Dendritic cell treated with granulocyte-macrophage colony-stimulating factor and Interleukin-4, amounts not matched to agents 40 ng/mL and 50 ng/mL, for 4 days (primary cell): ENCODE measurements at regions of chr17 and their contacts with region 1.

Region 1: GRCh38 chr17:3004133-3004801 is 59.1 kb downstream of the OR1D5 start:
- H3K4me3 Mint-ChIP-seq: peak overlapping the region; percentile 59
- H3K27ac Mint-ChIP-seq: peak overlapping the region; percentile 74
- H3K4me1 Mint-ChIP-seq: peaks cover 44% of the 10 kb centered on the region
- H3K27me3 Mint-ChIP-seq: no peaks in the 10 kb centered on the region

Region 2: GRCh38 chr17:2745317-2746037 is 258.8 kb before region 1 on chr17:
- intact Hi-C with region 1: no loop called
- H3K4me3 Mint-ChIP-seq: no peak overlapping the region
- H3K27ac Mint-ChIP-seq: no peak overlapping the region
- H3K4me1 Mint-ChIP-seq: no peaks in the 10 kb centered on the region
- H3K27me3 Mint-ChIP-seq: peaks cover 50% of the 10 kb centered on the region

Region 3: DNA sequence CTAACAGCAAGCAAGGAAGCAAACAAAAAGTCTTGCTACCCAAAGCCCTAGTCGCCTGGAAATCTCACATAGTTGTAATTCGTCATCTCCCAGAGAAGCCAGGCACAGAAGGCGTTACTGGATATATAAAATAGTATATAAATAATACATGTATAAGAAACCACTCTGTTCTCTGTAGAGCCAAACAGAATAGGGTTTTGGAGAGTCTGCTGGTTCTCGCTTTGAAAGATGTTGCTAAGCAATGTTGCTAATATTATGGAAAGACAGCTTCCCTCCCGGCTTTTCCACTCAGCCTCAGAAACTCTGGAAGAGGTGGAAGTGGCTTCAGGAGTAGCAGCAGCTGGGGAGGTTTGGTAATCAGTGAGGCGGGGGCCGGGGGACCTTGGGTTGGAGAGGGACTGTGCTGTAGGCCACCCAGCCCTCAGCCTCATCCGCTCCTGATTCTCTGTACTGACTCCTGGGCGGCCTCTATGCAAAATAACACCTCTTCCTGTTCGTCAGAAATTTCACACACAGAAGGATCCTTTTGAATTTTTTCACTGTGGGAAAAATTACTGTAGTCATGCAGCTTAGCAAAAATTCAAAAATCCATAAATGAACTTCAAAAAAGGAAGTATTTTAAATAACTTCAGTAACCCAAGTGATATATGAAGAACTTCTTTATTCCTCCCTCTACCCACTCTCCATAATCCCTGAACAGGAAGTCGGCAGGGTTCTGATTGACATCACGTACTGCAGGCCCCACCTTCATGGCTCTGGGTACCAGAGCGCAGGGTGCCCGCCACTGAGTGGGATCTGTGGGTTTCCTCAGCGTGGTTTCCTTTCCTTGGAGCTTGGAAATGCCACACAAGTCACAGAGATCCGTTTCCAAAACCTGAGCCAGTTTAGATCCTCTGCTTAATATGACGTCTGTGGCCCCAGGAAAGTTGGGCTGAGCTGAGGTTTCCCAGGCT is 156.6 kb before region 1 on chr17:
- intact Hi-C with region 1: loop called (anchors 5 kb)
- H3K4me3 Mint-ChIP-seq: peak overlapping the region; percentile 30
- H3K27ac Mint-ChIP-seq: peak overlapping the region; percentile 80
- H3K4me1 Mint-ChIP-seq: peaks cover 40% of the 10 kb centered on the region
- H3K27me3 Mint-ChIP-seq: peaks cover 21% of the 10 kb centered on the region